Upper lobe of right lung (tissue), 1 donor: ENCODE measurements at regions of chr11 and their contacts with region 1.

Region 1: GRCh38 chr11:61679893-61680621 is at the start of gene DAGLA:
- DNase-seq: peak; percentile 91
- ATAC-seq: peak; percentile 92
- H3K4me3 ChIP-seq: peak within 1 kb of the TSS; percentile 58
- H3K27ac ChIP-seq: no peak within 1 kb of the TSS
- H3K4me1 ChIP-seq: peaks cover 10% of the 10 kb centered on the region
- H3K27me3 ChIP-seq: peaks cover 11% of the 10 kb centered on the region
- CTCF ChIP-seq: peak; percentile 87
- total RNA-seq, gene DAGLA: 6.0 TPM

Region 2: GRCh38 chr11:61737131-61737530 is 57.1 kb after region 1 on chr11:
- intact Hi-C with region 1: loop called (anchors 5 kb)
- DNase-seq: no peak
- ATAC-seq: no peak
- H3K4me3 ChIP-seq: no peak overlapping the region
- H3K27ac ChIP-seq: no peak overlapping the region
- H3K4me1 ChIP-seq: peaks cover 8% of the 10 kb centered on the region
- H3K27me3 ChIP-seq: no peaks in the 10 kb centered on the region
- CTCF ChIP-seq: no peak